ENCODE measurements at regions of chr3 and their contacts with region 1.

Region 1: GRCh38 chr3:138694287-138695007 is 85.9 kb downstream of the FAIM start:
- DNase-seq: no peak
- ATAC-seq: no peak
- H3K4me3 ChIP-seq: no peak overlapping the region
- H3K4me3 Mint-ChIP-seq: no peak overlapping the region
- H3K27ac ChIP-seq: no peak overlapping the region
- H3K27ac Mint-ChIP-seq: no peak overlapping the region
- H3K4me1 ChIP-seq: no peaks in the 10 kb centered on the region
- H3K4me1 Mint-ChIP-seq: no peaks in the 10 kb centered on the region
- H3K27me3 ChIP-seq: no peaks in the 10 kb centered on the region
- H3K27me3 Mint-ChIP-seq: no peaks in the 10 kb centered on the region

Region 2: GRCh38 chr3:138774529-138775253 is 80.2 kb after region 1 on chr3:
- CTCF ChIA-PET with region 1: no interaction called
- POLR2A ChIA-PET with region 1: interaction called in 1 of 2 experiments, 10 read pairs
- DNase-seq: no peak
- ATAC-seq: peak in 3 of 4 experiments; percentile 58 to 78 (median 66)
- H3K4me3 ChIP-seq: no peak overlapping the region
- H3K4me3 Mint-ChIP-seq: no peak overlapping the region
- H3K27ac ChIP-seq: no peak overlapping the region
- H3K27ac Mint-ChIP-seq: peak overlapping the region in 1 of 2 donors; percentile 46
- H3K4me1 ChIP-seq: peaks cover 7 to 8% of the 10 kb centered on the region in 2 experiments
- H3K4me1 Mint-ChIP-seq: peaks cover 8 to 50% (median 48%) of the 10 kb centered on the region in 3 donors
- H3K27me3 ChIP-seq: no peaks in the 10 kb centered on the region
- H3K27me3 Mint-ChIP-seq: no peaks in the 10 kb centered on the region

Measured in T-cell (primary cell).